Colonic mucosa (tissue), 4 donors: ENCODE measurements at regions of chr3 and their contacts with region 1.

Region 1: DNA sequence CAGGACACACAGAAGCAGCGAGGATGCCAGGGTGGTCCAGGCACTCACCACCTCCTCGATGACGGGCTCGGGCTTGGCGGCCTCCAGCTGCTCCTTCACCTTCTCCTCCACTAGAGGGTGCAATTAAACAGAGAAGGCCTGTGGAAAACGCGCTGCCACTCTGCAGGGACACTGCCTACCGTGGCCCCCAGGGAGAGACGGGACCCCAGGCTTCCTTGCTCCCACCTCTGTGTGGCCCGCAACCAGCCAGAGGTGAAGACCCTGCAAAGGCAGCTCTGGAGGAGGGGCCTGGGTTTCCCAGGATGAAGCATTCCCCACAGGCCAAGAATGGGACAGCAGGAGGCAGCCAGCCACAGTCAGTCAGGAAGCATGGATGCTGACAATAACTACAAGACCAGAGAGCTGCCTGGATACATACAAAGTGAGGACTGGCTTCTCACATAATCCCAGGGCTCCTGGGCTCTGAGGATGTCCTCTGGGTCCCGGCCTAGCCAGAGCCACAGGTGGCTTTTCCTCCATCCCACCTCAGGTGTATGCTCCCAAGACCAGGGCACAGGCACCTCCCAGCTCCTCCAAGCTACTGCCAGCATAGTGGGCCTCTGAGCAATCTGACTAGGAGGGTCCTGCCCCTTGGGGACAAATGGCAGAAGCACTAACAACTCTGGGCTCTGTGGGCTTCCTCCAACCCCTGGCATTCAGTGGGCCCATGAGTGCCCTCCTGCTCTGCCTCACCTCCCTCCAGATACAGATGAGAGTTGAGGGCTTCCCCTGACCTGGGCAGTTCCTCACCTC is 46.2 kb downstream of the PTH1R start:
- DNase-seq: peak; percentile 49
- H3K4me3 ChIP-seq: no peak overlapping the region
- H3K27ac ChIP-seq: no peak overlapping the region
- H3K4me1 ChIP-seq: peaks cover 20% of the 10 kb centered on the region
- H3K27me3 ChIP-seq: no peaks in the 10 kb centered on the region
- CTCF ChIP-seq: peak; percentile 74

Region 2: GRCh38 chr3:46987743-46988401 is 64.1 kb after region 1 on chr3:
- intact Hi-C with region 1: loop called (anchors 5 kb)
- DNase-seq: peak; percentile 87
- H3K4me3 ChIP-seq: no peak overlapping the region
- H3K27ac ChIP-seq: peak overlapping the region; percentile 44
- H3K4me1 ChIP-seq: peaks cover 13% of the 10 kb centered on the region
- H3K27me3 ChIP-seq: no peaks in the 10 kb centered on the region
- CTCF ChIP-seq: no peak

Region 3: GRCh38 chr3:46998121-46998851 is 74.5 kb after region 1 on chr3:
- intact Hi-C with region 1: loop called (anchors 2 kb)
- DNase-seq: peak; percentile 78
- H3K4me3 ChIP-seq: no peak overlapping the region
- H3K27ac ChIP-seq: no peak overlapping the region
- H3K4me1 ChIP-seq: no peaks in the 10 kb centered on the region
- H3K27me3 ChIP-seq: no peaks in the 10 kb centered on the region
- CTCF ChIP-seq: peak; percentile 80

Region 4: DNA sequence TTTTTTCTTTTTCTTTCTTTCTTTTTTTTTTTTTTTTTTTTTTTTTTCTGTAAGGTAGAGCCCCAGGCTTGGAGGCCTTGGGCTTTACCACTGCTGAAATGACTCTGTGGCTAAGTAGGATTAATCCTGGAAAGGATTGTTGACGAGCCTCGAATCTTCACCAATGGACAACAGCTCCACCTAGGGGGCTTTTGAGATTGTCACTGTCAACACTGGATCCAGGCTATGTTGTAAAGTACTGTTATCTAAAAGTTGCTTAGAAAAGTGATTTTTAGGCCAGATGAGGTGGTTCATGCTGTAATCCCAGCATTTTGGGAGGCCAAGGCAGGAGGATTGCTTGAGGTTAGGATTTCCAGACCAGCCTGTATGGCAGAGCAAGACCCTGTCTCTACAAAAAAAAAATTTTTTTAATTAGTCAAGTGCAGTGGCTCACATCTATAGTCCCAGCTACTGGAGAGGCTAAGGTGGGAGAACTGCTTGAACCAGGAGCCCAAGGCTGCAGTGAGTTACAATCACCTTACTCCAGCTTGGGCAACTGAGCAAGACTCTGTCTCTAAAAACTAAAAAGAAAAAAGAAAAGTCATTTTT is 400.6 kb after region 1 on chr3:
- intact Hi-C with region 1: loop called (anchors 10 kb)
- DNase-seq: peak; percentile 67
- H3K4me3 ChIP-seq: no peak overlapping the region
- H3K27ac ChIP-seq: no peak overlapping the region
- H3K4me1 ChIP-seq: no peaks in the 10 kb centered on the region
- H3K27me3 ChIP-seq: no peaks in the 10 kb centered on the region
- CTCF ChIP-seq: peak; percentile 78